Activated B cell treated with CpG ODN at 0.5 μM for 24 hours (primary cell): ENCODE measurements at regions of chr14 and their contacts with region 1.

Region 1: GRCh38 chr14:68401855-68402254 is 391.0 kb downstream of the ZFP36L1 start:
- DNase-seq: no peak
- ATAC-seq: peak; percentile 59
- H3K4me3 Mint-ChIP-seq: peak overlapping the region; percentile 72
- H3K27ac Mint-ChIP-seq: peak overlapping the region; percentile 92
- H3K4me1 Mint-ChIP-seq: peaks cover 92% of the 10 kb centered on the region
- H3K27me3 Mint-ChIP-seq: no peaks in the 10 kb centered on the region
- CTCF ChIP-seq: no peak

Region 2: DNA sequence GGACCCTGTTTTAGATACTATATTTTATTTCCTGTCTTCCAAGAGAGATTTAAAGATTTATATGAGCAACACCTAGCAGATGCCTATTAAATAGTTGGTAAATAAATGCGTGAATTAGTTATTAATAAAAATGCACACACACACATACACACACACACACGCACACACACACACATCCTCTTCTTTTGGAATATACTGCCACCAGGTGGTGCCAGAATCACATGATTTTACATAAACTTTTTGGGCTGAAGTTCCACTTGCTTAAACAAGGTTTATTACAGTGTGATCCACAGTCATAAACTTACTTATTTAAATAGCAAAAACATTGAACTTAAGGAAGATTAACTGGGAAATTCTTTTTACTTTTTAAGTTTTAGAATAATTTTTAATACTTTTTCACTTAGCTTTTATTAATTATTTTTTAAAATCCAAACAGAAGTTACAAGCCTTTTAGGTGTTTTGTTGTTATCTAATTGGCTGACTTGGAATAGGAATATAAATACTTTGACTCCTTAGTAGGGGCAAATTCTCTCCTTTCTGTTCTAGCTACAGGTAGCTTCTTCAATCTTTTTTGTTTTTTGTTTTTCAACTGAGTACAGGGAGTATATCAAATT is 564.7 kb before region 1 on chr14:
- CTCF ChIA-PET with region 1: no interaction called
- POLR2A ChIA-PET with region 1: no interaction called
- intact Hi-C with region 1: no loop called
- DNase-seq: no peak
- ATAC-seq: peak; percentile 75
- H3K4me3 Mint-ChIP-seq: no peak overlapping the region
- H3K27ac Mint-ChIP-seq: no peak overlapping the region
- H3K4me1 Mint-ChIP-seq: no peaks in the 10 kb centered on the region
- H3K27me3 Mint-ChIP-seq: no peaks in the 10 kb centered on the region
- CTCF ChIP-seq: no peak

Region 3: GRCh38 chr14:68225321-68225720 is 176.5 kb before region 1 on chr14:
- CTCF ChIA-PET with region 1: no interaction called
- POLR2A ChIA-PET with region 1: no interaction called
- intact Hi-C with region 1: no loop called
- DNase-seq: no peak
- ATAC-seq: no peak
- H3K4me3 Mint-ChIP-seq: no peak overlapping the region
- H3K27ac Mint-ChIP-seq: no peak overlapping the region
- H3K4me1 Mint-ChIP-seq: no peaks in the 10 kb centered on the region
- H3K27me3 Mint-ChIP-seq: no peaks in the 10 kb centered on the region
- CTCF ChIP-seq: no peak

Region 4: GRCh38 chr14:68307014-68307789 is 94.7 kb before region 1 on chr14:
- CTCF ChIA-PET with region 1: no interaction called
- POLR2A ChIA-PET with region 1: interaction called, 35 read pairs
- intact Hi-C with region 1: no loop called
- DNase-seq: no peak
- ATAC-seq: no peak
- H3K4me3 Mint-ChIP-seq: no peak overlapping the region
- H3K27ac Mint-ChIP-seq: peak overlapping the region; percentile 84
- H3K4me1 Mint-ChIP-seq: peaks cover 72% of the 10 kb centered on the region
- H3K27me3 Mint-ChIP-seq: no peaks in the 10 kb centered on the region
- CTCF ChIP-seq: no peak

Region 5: DNA sequence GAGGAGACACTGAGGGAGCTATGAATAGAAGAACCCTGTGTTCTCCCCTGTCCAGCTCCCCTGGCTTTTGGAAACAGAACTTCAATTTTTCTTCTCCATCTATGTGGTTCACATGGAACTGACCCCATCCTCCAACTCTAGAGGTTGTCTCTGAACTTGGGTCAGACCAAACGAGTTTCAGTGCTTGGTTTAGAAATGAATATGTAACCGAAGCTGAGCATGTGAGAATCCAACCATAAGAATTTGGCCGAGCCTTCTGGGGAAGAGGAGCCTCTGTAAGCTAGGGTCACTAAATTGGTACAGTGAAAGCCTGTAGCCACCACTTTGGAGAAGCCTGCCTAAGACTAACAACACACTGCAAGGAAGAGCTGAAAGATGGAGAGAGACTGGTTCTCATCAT is 73.3 kb before region 1 on chr14:
- CTCF ChIA-PET with region 1: no interaction called
- POLR2A ChIA-PET with region 1: interaction called, 9 read pairs
- intact Hi-C with region 1: loop called (anchors 5 kb)
- DNase-seq: no peak
- ATAC-seq: no peak
- H3K4me3 Mint-ChIP-seq: no peak overlapping the region
- H3K27ac Mint-ChIP-seq: peak overlapping the region; percentile 13
- H3K4me1 Mint-ChIP-seq: peaks cover 63% of the 10 kb centered on the region
- H3K27me3 Mint-ChIP-seq: no peaks in the 10 kb centered on the region
- CTCF ChIP-seq: no peak

Region 6: GRCh38 chr14:68377459-68377858 is 24.4 kb before region 1 on chr14:
- CTCF ChIA-PET with region 1: interaction called, 10 read pairs
- POLR2A ChIA-PET with region 1: interaction called, 38 read pairs
- intact Hi-C with region 1: no loop called
- DNase-seq: no peak
- ATAC-seq: peak; percentile 43
- H3K4me3 Mint-ChIP-seq: peak overlapping the region; percentile 50
- H3K27ac Mint-ChIP-seq: peak overlapping the region; percentile 83
- H3K4me1 Mint-ChIP-seq: peaks cover 69% of the 10 kb centered on the region
- H3K27me3 Mint-ChIP-seq: no peaks in the 10 kb centered on the region
- CTCF ChIP-seq: no peak

Region 7: GRCh38 chr14:68464711-68465110 is 62.9 kb after region 1 on chr14:
- CTCF ChIA-PET with region 1: no interaction called
- POLR2A ChIA-PET with region 1: no interaction called
- intact Hi-C with region 1: no loop called
- DNase-seq: no peak
- ATAC-seq: no peak
- H3K4me3 Mint-ChIP-seq: no peak overlapping the region
- H3K27ac Mint-ChIP-seq: no peak overlapping the region
- H3K4me1 Mint-ChIP-seq: peaks cover 33% of the 10 kb centered on the region
- H3K27me3 Mint-ChIP-seq: no peaks in the 10 kb centered on the region
- CTCF ChIP-seq: no peak

Region 8: GRCh38 chr14:68495101-68496039 is 93.5 kb after region 1 on chr14:
- CTCF ChIA-PET with region 1: interaction called, 7 read pairs
- POLR2A ChIA-PET with region 1: interaction called, 31 read pairs
- intact Hi-C with region 1: loop called (anchors 1 kb)
- DNase-seq: no peak
- ATAC-seq: peak; percentile 92
- H3K4me3 Mint-ChIP-seq: peak overlapping the region; percentile 64
- H3K27ac Mint-ChIP-seq: peak overlapping the region; percentile 98
- H3K4me1 Mint-ChIP-seq: peaks cover 84% of the 10 kb centered on the region
- H3K27me3 Mint-ChIP-seq: no peaks in the 10 kb centered on the region
- CTCF ChIP-seq: no peak